ENCODE measurements at regions of chr3 and their contacts with region 1.

Region 1: DNA sequence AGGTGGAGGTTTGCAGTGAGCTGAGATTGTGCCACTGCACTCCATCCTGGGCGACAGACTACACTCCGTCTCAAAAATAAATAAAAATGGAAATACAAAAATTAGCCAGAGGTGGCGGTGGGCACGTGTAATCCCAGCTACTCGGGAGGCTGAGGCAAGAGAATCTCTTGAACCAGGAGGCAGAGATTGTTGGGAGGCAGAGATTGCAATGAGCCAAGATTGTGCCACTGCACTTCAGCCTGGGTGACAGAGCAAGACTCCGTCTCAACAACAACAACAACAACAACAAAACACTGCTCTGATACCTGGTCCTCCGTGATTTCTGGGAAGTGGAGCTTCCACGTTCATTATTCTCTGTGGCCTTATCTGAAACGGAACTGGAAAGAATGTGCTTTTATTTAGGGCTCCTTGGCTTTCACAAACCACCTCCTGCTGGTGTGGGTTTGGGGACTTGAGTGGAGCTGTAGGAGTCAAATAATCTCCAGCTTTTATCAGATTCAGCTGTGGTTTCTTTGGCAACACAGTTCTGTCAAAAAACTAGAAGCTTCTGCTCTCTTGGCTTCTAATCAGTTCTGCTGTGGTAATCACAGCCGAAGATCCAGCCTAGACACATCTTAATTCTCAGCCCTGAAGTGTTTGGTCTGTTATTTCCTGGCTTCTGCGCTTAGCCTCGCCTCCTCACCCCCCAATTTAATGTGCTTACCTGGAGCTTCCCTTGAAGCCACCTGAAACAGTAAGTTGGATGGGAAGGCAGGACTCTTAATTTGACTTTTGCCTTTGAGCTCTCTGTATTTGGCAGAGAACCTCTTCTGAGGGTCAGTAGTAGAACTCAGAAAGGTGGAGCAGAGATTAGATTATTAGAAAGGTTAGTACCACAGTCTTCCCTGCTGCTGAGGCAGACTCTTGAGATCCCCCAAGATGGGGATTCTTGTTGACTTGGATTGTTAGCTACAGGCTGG is 21.4 kb downstream of the IRAK2 start:
- DNase-seq: peak in 4 of 5 donors; percentile 47 to 66 (median 50)
- H3K4me3 ChIP-seq: peak overlapping the region in 1 of 2 donors; percentile 10
- H3K4me3 Mint-ChIP-seq: peak overlapping the region; percentile 58 to 85 (median 75)
- H3K27ac ChIP-seq: peak overlapping the region; percentile 51
- H3K27ac Mint-ChIP-seq: peak overlapping the region; percentile 82 to 97 (median 94)
- H3K4me1 ChIP-seq: peaks cover 54% of the 10 kb centered on the region
- H3K4me1 Mint-ChIP-seq: peaks cover 41 to 62% (median 51%) of the 10 kb centered on the region in 4 donors
- H3K27me3 ChIP-seq: no peaks in the 10 kb centered on the region
- H3K27me3 Mint-ChIP-seq: no peaks in the 10 kb centered on the region

Region 2: DNA sequence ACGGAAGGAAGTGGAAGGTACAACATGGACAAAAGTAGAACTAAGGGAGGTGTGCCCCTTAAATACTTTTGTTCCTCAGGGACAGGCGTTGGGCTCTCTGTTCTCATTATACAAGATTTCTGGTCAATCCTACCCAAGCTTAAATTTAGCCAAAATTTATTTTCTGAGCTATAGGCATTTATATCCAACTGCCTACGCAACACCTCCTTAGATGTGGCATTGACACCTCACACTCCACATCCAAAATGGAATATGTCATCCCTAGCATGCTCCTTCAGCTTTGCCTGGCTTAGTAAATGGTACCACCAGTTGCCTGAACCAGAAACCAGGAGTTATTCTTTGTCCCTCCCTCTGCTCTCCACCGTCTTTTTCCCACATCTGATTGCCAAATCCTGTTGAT is 104.2 kb before region 1 on chr3:
- CTCF ChIA-PET with region 1: no interaction called
- POLR2A ChIA-PET with region 1: no interaction called
- intact Hi-C with region 1: no loop called
- DNase-seq: no peak
- H3K4me3 ChIP-seq: no peak overlapping the region
- H3K4me3 Mint-ChIP-seq: no peak overlapping the region
- H3K27ac ChIP-seq: no peak overlapping the region
- H3K27ac Mint-ChIP-seq: peak overlapping the region in 2 of 7 donors; percentile 6 to 64
- H3K4me1 ChIP-seq: no peaks in the 10 kb centered on the region
- H3K4me1 Mint-ChIP-seq: no peaks in the 10 kb centered on the region
- H3K27me3 ChIP-seq: no peaks in the 10 kb centered on the region
- H3K27me3 Mint-ChIP-seq: no peaks in the 10 kb centered on the region

Region 3: GRCh38 chr3:10198761-10199649 is 12.9 kb after region 1 on chr3:
- CTCF ChIA-PET with region 1: interaction called, 14 read pairs
- POLR2A ChIA-PET with region 1: interaction called, 19 read pairs
- intact Hi-C with region 1: loop called (anchors 1 kb)
- DNase-seq: peak; percentile 76 to 95 (median 80)
- H3K4me3 ChIP-seq: peak overlapping the region; percentile 2 to 21
- H3K4me3 Mint-ChIP-seq: peak overlapping the region in 7 of 8 donors; percentile 55 to 79 (median 73)
- H3K27ac ChIP-seq: peak overlapping the region; percentile 88
- H3K27ac Mint-ChIP-seq: peak overlapping the region; percentile 95 to 99 (median 97)
- H3K4me1 ChIP-seq: peaks cover 84% of the 10 kb centered on the region
- H3K4me1 Mint-ChIP-seq: peaks cover 42 to 81% (median 63%) of the 10 kb centered on the region in 4 donors
- H3K27me3 ChIP-seq: no peaks in the 10 kb centered on the region
- H3K27me3 Mint-ChIP-seq: no peaks in the 10 kb centered on the region

Region 4: DNA sequence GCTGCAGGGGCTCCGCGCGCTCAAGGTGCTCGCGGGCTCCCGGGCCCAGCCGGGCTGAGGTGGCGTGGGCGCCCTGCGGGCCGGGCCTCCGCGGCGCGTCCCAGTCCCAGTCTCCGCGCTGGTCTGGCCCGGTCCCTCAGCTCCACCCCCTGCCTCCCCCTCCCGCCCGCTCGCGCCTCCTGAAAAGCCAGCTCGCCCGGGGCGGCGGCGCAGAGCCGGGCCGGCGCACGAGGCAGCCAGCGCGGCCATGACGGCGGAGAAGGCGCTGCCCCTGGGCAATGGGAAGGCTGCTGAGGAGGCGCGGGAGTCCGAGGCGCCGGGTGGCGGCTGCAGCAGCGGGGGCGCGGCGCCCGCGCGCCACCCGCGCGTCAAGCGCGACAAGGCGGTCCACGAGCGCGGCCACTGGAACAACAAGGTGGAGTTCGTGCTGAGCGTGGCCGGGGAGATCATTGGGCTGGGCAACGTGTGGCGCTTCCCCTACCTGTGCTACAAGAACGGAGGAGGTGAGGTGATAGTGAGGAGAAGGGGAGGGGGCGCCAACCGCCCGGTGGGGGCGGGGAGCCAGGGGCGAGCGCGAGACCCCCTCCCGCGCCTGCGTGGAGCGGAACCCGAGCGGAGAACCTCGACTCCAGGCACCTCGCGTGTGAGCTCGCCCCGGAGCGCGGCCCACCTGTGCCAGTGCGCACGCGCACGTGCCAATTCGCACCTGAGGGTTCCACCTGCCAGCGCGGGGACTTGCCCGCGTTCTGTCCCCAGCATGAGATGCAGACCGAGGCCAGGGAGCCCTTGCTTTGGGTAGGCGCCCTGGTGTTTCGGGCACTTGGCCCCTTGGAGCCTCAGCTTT is 630.2 kb after region 1 on chr3 and contains the start of gene SLC6A11:
- CTCF ChIA-PET with region 1: no interaction called
- POLR2A ChIA-PET with region 1: no interaction called
- intact Hi-C with region 1: no loop called
- DNase-seq: no peak
- H3K4me3 ChIP-seq: no peak within 1 kb of the TSS
- H3K4me3 Mint-ChIP-seq: peak within 1 kb of the TSS in 2 of 8 donors; percentile 11 to 59
- H3K27ac ChIP-seq: no peak within 1 kb of the TSS
- H3K27ac Mint-ChIP-seq: no peak within 1 kb of the TSS
- H3K4me1 ChIP-seq: no peaks in the 10 kb centered on the region
- H3K4me1 Mint-ChIP-seq: peaks cover 0 to 6% (median 0%) of the 10 kb centered on the region in 4 donors
- H3K27me3 ChIP-seq: peaks cover 3% of the 10 kb centered on the region
- H3K27me3 Mint-ChIP-seq: peaks cover 19 to 25% of the 10 kb centered on the region in 2 donors
- total RNA-seq, gene SLC6A11: not detected

Measured in CD4-positive, alpha-beta memory T cell (primary cell).